ENCODE measurements at regions of chr9 and their contacts with region 1.

Region 1: DNA sequence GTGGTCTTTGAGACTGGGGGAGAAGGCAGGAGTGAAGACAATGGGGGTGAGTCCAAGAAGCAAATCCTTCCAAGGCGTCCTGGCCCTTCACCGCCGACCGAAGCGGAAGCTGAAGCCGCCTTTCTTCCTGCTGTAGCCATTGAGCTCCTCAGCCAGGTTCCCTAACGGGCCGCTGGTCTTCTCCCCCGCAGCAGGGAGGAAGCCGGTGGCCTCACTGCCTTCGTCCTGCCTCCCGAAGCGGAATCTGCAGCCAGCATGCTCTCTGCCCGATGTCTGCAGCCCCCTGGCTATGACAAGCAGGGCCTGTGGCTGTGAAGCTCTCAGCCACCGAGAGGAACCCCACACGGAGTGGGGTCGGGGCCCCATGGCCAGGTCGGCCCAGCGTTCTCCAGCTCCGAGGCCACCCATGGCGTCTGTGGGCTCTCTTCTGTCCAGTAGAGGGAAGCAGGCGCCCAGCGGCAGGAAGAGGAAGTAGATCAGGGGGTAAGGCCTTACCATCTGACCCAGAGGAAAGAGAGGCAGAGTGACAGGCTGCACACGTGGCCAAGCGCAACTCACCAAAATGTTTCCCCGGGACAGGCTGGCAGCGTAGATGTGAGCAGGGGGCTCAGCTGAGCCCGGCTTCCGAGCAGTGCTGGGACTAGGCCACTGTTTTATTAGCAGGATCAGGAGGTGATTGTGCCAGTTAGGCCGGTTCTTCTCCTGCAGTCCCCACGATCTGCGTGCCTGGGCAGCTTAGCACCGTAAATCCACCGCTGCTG is 3.1 kb downstream of the QRFP start:
- DNase-seq: peak; percentile 35 to 67
- ATAC-seq: peak; percentile 63 to 79
- H3K4me3 ChIP-seq: no peak overlapping the region
- H3K27ac ChIP-seq: 0 out of 6 replicates have a peak overlapping the region, but pooled peaks of 1 of the 2 experiments have one; percentile 21
- H3K4me1 ChIP-seq: no peaks in the 10 kb centered on the region
- CTCF ChIP-seq: peak; percentile 48
- EP300 ChIP-seq: no peak
- POLR2A ChIP-seq: no peak
- RAD21 ChIP-seq: peak; percentile 73 to 82

Region 2: DNA sequence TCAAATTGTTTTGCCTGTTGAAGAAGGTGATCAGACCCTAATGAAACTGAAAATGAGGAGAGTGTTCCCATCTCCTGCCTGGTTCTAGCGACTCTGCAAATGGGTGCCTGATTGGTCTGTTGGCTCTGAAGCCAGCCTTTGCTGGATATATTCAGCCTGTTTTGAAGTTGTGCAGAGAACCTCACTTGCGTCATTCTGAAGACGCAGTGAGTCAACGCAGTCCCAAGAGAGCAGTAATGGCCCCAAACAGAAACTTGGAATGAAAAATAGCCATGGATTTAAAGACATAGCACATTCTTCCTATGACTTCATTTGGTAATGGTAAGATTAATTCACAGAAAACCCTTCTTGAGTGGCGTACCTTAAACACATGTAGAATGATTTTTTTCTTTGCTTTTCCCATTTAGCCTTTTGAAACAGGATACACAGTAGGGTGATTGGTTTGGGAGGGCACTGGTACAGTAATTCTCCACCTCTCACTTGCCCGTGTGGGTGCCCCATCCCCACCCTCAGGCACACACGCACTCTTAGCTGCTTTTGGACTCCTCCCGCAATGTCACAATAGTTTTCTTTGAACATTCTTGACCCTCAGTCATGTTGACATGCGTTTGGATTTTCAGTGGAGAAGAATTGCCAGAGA is 112.5 kb before region 1 on chr9:
- CTCF ChIA-PET with region 1: no interaction called
- POLR2A ChIA-PET with region 1: no interaction called
- DNase-seq: peak; percentile 62 to 88
- ATAC-seq: peak; percentile 96 to 97
- H3K4me3 ChIP-seq: peak overlapping the region; percentile 18; the same call in 2 of the 3 replicates
- H3K27ac ChIP-seq: peak overlapping the region; percentile 84 to 88
- H3K4me1 ChIP-seq: peaks cover 50% of the 10 kb centered on the region
- CTCF ChIP-seq: no peak
- EP300 ChIP-seq: peak in 1 of 2 experiments; percentile 43; a peak in 1 of 5 replicates
- POLR2A ChIP-seq: no peak
- RAD21 ChIP-seq: no peak; a peak in 2 of 5 replicates

Region 3: GRCh38 chr9:130847327-130848217 is 45.9 kb before region 1 on chr9:
- CTCF ChIA-PET with region 1: no interaction called
- POLR2A ChIA-PET with region 1: no interaction called
- DNase-seq: peak; percentile 87 to 90
- ATAC-seq: peak; percentile 79 to 81
- H3K4me3 ChIP-seq: peak overlapping the region; percentile 35; the same call in 2 of the 3 replicates
- H3K27ac ChIP-seq: peak overlapping the region; percentile 91 to 93
- H3K4me1 ChIP-seq: peaks cover 72% of the 10 kb centered on the region
- CTCF ChIP-seq: peak; percentile 19; the same call in 1 of the 3 replicates
- EP300 ChIP-seq: peak; percentile 50 to 74; a peak in 3 of 5 replicates
- POLR2A ChIP-seq: no peak
- RAD21 ChIP-seq: 0 out of 5 replicates have a peak, but pooled peaks of 1 of the 2 experiments have one; percentile 6

Region 4: DNA sequence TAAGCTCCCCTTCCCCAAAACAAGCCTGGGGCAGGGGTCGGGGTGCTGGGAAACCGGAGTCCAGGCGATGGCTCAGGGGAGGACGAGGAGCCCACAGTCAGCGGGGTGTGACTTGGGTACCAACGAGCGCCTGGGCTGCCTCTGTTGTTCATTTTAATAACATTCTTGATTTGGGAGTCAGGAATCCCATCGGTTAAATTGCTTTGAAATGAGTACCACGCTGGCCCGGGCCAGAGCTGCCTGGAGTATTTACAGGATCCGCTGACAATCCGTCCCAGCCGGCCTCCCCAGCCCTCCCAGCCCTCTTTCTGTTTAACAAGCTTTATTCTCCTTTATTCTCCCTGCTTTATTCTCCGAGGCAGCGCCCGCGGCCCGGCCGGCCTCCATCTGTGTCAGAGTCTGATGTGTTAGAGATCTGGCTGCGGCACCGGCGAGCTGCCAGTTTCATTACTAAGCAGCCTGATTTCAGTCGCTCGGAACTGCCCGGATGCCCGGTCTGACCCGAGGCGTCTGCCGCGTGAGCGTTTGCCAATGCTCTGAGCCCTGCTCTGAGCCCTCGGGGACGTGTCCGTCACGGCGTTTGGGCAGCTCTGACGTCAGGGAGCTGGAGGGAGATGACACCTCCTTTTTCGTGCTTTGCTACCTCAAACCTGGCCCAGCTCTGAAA is 19.5 kb after region 1 on chr9:
- CTCF ChIA-PET with region 1: interaction called, 12 read pairs
- POLR2A ChIA-PET with region 1: no interaction called
- DNase-seq: no peak
- ATAC-seq: no peak
- H3K4me3 ChIP-seq: no peak overlapping the region
- H3K27ac ChIP-seq: no peak overlapping the region
- H3K4me1 ChIP-seq: no peaks in the 10 kb centered on the region
- CTCF ChIP-seq: no peak
- EP300 ChIP-seq: no peak
- POLR2A ChIP-seq: no peak
- RAD21 ChIP-seq: no peak

Region 5: DNA sequence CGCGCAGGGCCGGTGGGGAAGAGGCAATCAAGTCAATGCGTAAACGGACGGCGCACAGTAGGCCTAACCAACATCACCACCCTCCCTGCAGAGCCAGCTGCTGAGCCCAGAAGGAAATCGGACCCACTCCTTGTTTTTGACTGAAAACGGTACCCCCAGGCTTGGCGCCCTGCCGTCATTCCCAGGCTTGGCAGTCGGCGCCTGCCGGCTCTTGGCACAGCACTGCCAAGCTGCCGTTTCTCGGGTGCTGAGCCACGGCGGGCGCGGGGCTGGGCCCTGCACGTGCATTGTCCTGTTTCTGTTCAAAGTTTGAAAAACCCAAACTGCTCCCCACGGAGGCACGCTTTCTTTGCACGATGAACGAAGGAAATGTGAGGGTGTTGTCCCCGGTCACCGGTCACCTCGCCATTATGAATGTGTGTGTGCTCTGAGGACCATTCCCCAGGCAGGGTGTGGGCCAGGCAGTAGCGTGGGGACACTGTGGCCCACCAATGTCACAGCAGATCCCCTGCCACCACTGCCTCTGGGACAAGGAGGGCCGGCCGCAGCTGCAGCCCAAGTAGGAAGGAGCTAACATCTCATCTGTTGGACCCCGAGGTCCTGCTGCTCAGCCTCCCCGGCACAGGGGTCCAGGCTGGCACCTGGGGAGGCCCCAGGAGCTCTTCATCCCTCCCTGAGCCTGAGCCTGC is 25.5 kb after region 1 on chr9:
- CTCF ChIA-PET with region 1: interaction called, 12 read pairs
- POLR2A ChIA-PET with region 1: no interaction called
- DNase-seq: no peak
- ATAC-seq: no peak
- H3K4me3 ChIP-seq: no peak overlapping the region
- H3K27ac ChIP-seq: no peak overlapping the region
- H3K4me1 ChIP-seq: no peaks in the 10 kb centered on the region
- CTCF ChIP-seq: no peak
- EP300 ChIP-seq: no peak
- POLR2A ChIP-seq: no peak
- RAD21 ChIP-seq: no peak

Region 6: GRCh38 chr9:130927995-130928900 is 34.7 kb after region 1 on chr9:
- CTCF ChIA-PET with region 1: interaction called, 38 read pairs
- POLR2A ChIA-PET with region 1: no interaction called
- DNase-seq: peak; percentile 81 to 83
- ATAC-seq: peak; percentile 60 to 72
- H3K4me3 ChIP-seq: peak overlapping the region; percentile 18; the same call in 2 of the 3 replicates
- H3K27ac ChIP-seq: peak overlapping the region; percentile 82 to 93
- H3K4me1 ChIP-seq: peaks cover 38% of the 10 kb centered on the region
- CTCF ChIP-seq: no peak
- EP300 ChIP-seq: no peak
- POLR2A ChIP-seq: no peak
- RAD21 ChIP-seq: no peak

Region 7: DNA sequence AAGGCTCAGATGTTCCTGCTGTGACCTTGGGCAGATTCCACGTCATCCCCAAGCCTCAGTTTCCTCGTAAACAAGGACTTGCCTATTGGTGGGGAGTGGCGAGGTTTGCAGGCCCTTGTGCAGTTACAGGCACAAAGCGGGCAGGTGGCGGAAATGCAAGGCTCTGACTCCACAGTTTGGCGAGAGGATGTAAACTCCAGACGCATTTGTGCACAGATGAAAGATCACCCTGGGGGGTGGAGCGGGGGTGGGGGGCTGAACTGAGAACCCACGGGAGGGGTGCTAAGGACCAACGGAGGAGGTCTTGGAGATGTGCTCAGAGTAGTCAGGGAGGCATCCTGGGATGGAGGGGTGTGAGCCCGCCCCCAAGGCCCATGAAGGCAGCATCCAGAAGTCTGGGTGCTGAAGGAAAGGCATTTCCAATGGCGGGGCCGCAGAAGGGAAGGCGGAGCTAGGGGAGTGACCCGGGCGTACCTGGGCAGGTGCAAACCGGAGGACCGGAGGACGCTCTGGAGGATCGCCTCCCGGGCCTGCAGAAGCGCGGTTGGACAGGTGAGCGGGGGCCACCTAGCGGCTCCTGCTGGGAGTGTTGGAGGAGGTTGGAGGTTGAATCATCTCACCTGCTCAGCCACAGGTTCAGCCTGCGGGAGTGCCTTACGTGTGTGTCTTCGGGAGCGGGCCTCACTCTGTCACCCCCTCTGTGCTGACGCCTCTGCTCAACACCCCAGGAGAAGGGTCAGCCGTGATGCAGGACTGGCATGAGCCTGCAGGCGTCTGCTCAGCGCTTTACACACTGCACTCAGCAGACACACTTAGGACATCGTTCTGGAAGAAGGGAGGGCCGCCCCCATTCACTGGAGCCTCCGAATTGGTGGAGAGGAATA is 47.4 kb after region 1 on chr9:
- CTCF ChIA-PET with region 1: interaction called, 38 read pairs
- POLR2A ChIA-PET with region 1: no interaction called
- DNase-seq: peak; percentile 73 to 74
- ATAC-seq: peak; percentile 54 to 74
- H3K4me3 ChIP-seq: no peak overlapping the region
- H3K27ac ChIP-seq: peak overlapping the region in 1 of 2 experiments; percentile 12; a peak in 1 of 6 replicates
- H3K4me1 ChIP-seq: peaks cover 46% of the 10 kb centered on the region
- CTCF ChIP-seq: peak; percentile 82
- EP300 ChIP-seq: no peak
- POLR2A ChIP-seq: no peak
- RAD21 ChIP-seq: peak; percentile 87 to 89

Region 8: DNA sequence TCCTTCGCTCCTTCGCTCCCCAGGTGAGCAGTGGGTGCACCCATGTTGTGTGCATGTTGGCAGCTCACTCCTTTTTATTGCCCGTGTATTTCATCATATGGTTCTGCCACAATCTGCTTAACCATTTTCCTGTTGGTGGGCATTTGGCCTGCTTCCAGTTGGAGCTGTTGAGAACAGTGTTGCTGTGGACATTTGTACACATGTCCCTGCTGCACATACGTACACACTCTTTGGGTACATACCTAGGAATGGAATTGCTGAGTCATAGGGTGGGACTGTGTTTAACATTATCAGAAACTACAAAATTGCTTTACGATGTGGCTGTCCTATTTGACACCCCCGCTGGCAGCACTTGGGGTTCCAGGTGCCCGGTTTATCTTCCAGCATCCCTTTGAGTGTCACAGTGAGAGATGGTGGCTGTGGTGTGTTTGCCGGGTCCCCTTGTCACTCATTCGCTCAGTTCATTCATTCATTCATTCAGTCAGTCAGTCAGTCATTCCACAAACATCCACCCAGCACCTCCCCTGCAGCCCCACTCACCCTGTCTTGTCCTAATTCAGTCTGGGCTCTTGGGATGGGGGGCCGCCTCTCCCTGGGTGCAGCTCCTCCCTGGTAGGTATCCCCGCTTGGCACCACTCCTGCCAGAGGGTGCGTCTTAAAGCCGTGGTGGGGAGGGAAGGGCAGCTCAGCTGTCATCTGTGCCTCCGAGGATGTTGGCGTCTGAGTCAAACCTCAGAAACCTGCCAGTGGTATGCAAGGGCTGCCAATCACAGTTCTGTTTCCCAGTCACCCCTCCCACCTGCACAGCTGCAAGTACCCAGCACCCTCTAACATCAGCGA is 53.5 kb after region 1 on chr9:
- CTCF ChIA-PET with region 1: interaction called, 27 read pairs
- POLR2A ChIA-PET with region 1: no interaction called
- DNase-seq: peak in 1 of 2 experiments; percentile 67
- ATAC-seq: peak; percentile 42 to 56; a peak in 5 of 6 replicates
- H3K4me3 ChIP-seq: peak overlapping the region; percentile 3; the same call in 1 of the 3 replicates
- H3K27ac ChIP-seq: peak overlapping the region; percentile 71 to 75
- H3K4me1 ChIP-seq: peaks cover 34% of the 10 kb centered on the region
- CTCF ChIP-seq: no peak
- EP300 ChIP-seq: no peak; a peak in 1 of 5 replicates
- POLR2A ChIP-seq: no peak
- RAD21 ChIP-seq: no peak